Natural killer cell (primary cell): ENCODE measurements at regions of chr2 and their contacts with region 1.

Region 1: DNA sequence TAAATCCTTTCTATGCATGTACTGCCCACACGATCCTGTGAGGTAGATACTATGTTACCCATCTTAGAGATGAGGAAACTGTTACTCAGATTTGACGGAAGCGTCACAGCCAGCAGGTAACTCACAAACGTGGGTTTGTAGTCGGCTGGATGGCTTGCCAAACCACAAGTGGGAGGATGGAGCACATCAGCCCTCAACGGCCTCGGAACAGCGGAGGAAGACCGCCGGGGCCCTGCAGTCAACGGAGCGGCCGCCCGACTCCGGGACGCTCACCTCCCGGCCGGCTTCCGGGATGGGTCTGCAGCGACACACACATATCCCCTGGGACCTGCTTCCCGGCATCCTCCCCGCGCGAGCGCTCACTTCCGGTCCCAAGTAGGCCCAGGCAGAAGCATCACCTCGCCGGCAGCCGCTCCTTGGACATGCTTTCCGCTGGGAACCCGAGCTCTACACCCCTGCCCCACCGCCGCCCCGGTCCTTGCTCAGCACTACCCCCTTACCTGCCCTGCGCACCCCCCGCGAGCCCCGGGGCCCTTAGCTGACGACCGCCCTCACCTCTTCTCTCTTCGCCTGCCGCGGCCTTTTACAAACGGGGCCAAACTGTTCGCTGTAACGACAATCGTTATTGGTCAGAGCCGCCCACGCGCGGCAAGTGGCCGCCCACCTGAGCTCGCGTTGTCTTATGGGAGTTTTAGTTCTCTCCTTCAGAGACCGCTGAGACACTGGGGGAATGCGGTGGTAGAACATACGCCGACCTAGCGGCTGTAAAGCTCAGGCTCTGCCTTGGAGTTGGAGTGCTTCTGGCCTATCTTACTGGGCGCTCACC is at the start of gene C2orf42:
- DNase-seq: peak; percentile 94 to 98
- ATAC-seq: peak; percentile 84 to 96 (median 88)
- H3K4me3 ChIP-seq: peak within 1 kb of the TSS; percentile 78
- H3K4me3 Mint-ChIP-seq: peak within 1 kb of the TSS; percentile 100
- H3K27ac ChIP-seq: peak within 1 kb of the TSS; percentile 90
- H3K27ac Mint-ChIP-seq: peak within 1 kb of the TSS; percentile 96 to 98
- H3K4me1 ChIP-seq: peaks cover 9% of the 10 kb centered on the region
- H3K4me1 Mint-ChIP-seq: peaks cover 16 to 19% of the 10 kb centered on the region in 2 donors
- H3K27me3 ChIP-seq: no peaks in the 10 kb centered on the region
- H3K27me3 Mint-ChIP-seq: no peaks in the 10 kb centered on the region
- CTCF ChIP-seq: no peak
- total RNA-seq, gene C2orf42: 22.7 to 31.5 (median 25.7) TPM

Region 2: DNA sequence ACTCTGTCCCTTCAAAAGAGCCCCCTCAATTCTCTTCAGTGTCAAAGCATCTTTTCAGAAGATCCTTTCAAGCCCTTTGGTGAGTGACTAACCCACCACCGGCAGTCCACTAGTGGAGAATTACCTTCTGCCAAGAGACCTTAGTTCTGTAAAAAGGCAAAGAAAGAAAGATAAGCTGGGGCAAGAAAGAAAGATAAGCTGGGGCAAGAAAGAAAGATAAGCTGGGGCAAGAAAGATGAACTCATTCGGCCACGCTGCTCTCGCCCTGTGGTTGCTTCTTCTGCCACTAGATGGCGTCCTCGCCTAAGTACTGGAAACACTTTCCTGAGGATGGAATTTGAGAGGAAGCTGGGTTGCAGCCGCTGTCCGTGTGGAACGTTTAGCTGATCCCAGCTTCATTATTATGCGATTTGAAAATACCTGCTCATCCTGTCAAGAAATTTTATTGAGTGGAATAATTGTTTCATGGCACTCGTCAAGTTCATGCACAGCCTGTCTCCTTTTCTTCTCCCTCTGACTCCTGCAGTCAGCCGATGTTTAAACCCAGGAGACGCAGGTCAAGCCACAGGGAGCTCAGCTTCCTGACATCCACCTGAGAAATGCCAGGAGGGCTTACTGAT is 466.0 kb before region 1 on chr2:
- intact Hi-C with region 1: loop called (anchors 5 kb)
- DNase-seq: peak; percentile 85 to 91
- ATAC-seq: peak; percentile 87 to 99 (median 96)
- H3K4me3 ChIP-seq: no peak overlapping the region
- H3K4me3 Mint-ChIP-seq: peak overlapping the region; percentile 72
- H3K27ac ChIP-seq: no peak overlapping the region
- H3K27ac Mint-ChIP-seq: peak overlapping the region in 1 of 2 donors; percentile 58
- H3K4me1 ChIP-seq: peaks cover 5% of the 10 kb centered on the region
- H3K4me1 Mint-ChIP-seq: peaks cover 6 to 8% of the 10 kb centered on the region in 2 donors
- H3K27me3 ChIP-seq: no peaks in the 10 kb centered on the region
- H3K27me3 Mint-ChIP-seq: no peaks in the 10 kb centered on the region
- CTCF ChIP-seq: peak; percentile 96

Region 3: DNA sequence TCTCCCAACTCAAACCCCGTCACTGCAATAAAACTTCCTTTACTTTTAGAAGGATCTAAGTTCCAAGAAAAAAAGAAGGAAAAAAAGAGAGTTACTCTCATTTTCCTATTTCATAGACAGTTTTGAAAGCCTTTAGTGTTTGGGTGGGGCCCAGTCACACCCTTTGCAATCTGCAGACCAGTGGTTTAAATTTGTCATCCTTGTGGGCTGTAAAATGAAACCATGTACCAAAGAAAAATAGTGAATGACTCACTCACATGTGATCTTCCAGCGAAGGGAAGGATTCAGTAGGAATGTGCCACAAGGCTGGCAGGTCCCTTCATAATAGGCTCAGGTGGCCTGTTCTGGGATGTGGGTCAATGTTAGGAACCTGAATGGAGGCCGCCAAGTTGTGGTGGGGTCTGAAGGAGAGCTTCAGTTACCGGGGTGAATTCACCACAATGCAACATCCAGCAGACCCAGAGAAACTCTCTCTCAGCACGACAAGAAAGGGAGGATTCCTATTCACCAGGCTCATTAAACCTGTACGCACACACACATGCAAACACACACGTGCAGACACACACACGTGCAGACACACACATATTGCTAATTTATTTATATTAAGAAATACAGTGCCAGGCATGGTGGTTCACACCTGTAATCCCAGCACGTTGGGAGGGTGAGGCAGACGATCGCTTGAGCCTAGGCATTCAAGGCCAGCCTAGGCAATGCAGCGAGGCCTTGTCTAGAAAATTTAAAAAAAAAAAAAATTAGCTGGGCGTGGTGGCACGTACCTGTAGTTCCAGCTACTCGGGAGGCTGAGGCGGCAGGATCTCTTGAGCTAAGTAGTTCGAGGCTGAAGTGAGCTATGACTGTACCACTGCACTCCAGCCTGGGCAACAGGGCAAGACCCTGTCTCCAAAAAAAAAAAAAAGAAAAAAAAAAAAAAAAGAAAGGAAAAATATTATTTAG is 420.2 kb before region 1 on chr2:
- intact Hi-C with region 1: no loop called
- DNase-seq: peak; percentile 44
- ATAC-seq: peak; percentile 54 to 75 (median 70)
- H3K4me3 ChIP-seq: no peak overlapping the region
- H3K4me3 Mint-ChIP-seq: peak overlapping the region; percentile 88
- H3K27ac ChIP-seq: peak overlapping the region; percentile 85
- H3K27ac Mint-ChIP-seq: peak overlapping the region; percentile 70 to 93
- H3K4me1 ChIP-seq: peaks cover 61% of the 10 kb centered on the region
- H3K4me1 Mint-ChIP-seq: peaks cover 81 to 85% of the 10 kb centered on the region in 2 donors
- H3K27me3 ChIP-seq: no peaks in the 10 kb centered on the region
- H3K27me3 Mint-ChIP-seq: no peaks in the 10 kb centered on the region
- CTCF ChIP-seq: no peak

Region 4: GRCh38 chr2:69893684-69894551 is 296.7 kb before region 1 on chr2 and contains the start of gene SNRNP27:
- intact Hi-C with region 1: loop called (anchors 5 kb)
- DNase-seq: peak; percentile 70 to 90
- ATAC-seq: peak; percentile 85 to 94 (median 93)
- H3K4me3 ChIP-seq: peak within 1 kb of the TSS; percentile 76
- H3K4me3 Mint-ChIP-seq: peak within 1 kb of the TSS; percentile 100
- H3K27ac ChIP-seq: peak within 1 kb of the TSS; percentile 71
- H3K27ac Mint-ChIP-seq: peak within 1 kb of the TSS; percentile 95 to 99
- H3K4me1 ChIP-seq: peaks cover 17% of the 10 kb centered on the region
- H3K4me1 Mint-ChIP-seq: peaks cover 24 to 29% of the 10 kb centered on the region in 2 donors
- H3K27me3 ChIP-seq: no peaks in the 10 kb centered on the region
- H3K27me3 Mint-ChIP-seq: no peaks in the 10 kb centered on the region
- CTCF ChIP-seq: no peak
- total RNA-seq, gene SNRNP27: 53.2 to 61.5 (median 58.2) TPM

Region 5: GRCh38 chr2:70069049-70069448 is 121.6 kb before region 1 on chr2:
- intact Hi-C with region 1: loop called (anchors 1 kb)
- DNase-seq: peak; percentile 58 to 93
- ATAC-seq: peak; percentile 84 to 93 (median 84)
- H3K4me3 ChIP-seq: no peak overlapping the region
- H3K4me3 Mint-ChIP-seq: peak overlapping the region; percentile 47
- H3K27ac ChIP-seq: peak overlapping the region; percentile 87
- H3K27ac Mint-ChIP-seq: peak overlapping the region; percentile 88 to 94
- H3K4me1 ChIP-seq: peaks cover 31% of the 10 kb centered on the region
- H3K4me1 Mint-ChIP-seq: peaks cover 31 to 35% of the 10 kb centered on the region in 2 donors
- H3K27me3 ChIP-seq: no peaks in the 10 kb centered on the region
- H3K27me3 Mint-ChIP-seq: no peaks in the 10 kb centered on the region
- CTCF ChIP-seq: no peak

Region 6: GRCh38 chr2:70248181-70248847 is 57.7 kb after region 1 on chr2 and contains the start of gene TIA1:
- intact Hi-C with region 1: loop called (anchors 1 kb)
- DNase-seq: peak; percentile 97 to 100
- ATAC-seq: peak; percentile 94 to 98 (median 96)
- H3K4me3 ChIP-seq: peak within 1 kb of the TSS; percentile 85
- H3K4me3 Mint-ChIP-seq: peak within 1 kb of the TSS; percentile 98
- H3K27ac ChIP-seq: peak within 1 kb of the TSS; percentile 92
- H3K27ac Mint-ChIP-seq: peak within 1 kb of the TSS; percentile 91 to 98
- H3K4me1 ChIP-seq: peaks cover 9% of the 10 kb centered on the region
- H3K4me1 Mint-ChIP-seq: peaks cover 37 to 45% of the 10 kb centered on the region in 2 donors
- H3K27me3 ChIP-seq: no peaks in the 10 kb centered on the region
- H3K27me3 Mint-ChIP-seq: no peaks in the 10 kb centered on the region
- CTCF ChIP-seq: no peak
- total RNA-seq, gene TIA1: 76.9 to 113 (median 93.2) TPM

Region 7: DNA sequence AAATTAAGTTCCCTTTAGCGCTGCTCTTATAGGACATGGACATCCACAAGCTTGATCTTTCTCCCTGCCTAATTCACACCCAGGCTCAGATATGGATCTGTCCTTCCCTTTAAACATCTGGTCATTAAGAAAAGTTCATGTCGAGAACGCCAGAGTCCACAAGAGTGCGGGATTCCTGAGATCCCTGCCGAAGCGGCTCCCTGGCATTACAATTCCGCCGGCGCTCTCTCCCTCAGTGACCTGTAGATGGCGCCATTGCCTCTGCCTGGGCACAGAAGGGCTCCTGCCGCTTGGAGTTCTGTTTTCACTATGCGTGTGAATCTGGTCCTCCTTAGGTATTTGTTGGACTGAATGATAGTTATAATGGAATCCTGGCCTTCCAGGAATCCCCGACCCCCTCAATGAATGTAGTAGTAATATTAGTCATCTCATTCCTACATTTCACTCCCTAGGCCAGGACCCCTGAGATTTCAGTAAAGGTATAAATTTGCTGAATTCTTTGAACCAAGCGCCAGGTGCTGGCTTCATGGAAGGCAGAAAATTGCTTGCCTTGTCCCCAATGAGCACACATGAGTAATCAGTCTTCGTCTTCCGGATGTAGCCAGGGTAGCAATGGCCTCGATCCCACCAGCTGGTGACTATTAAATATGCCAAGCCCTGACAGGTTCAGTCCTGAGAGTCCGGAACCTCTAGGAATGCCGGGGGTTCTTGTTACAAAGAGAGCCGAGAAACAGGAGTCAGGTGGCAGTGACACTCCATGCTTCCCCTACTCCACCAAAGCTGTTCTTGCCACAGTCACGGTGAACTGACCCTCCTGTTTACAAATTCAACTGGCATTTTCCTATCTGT is 671.4 kb after region 1 on chr2:
- intact Hi-C with region 1: no loop called
- DNase-seq: peak; percentile 72 to 85
- ATAC-seq: peak; percentile 81 to 99 (median 95)
- H3K4me3 ChIP-seq: no peak overlapping the region
- H3K4me3 Mint-ChIP-seq: peak overlapping the region; percentile 43
- H3K27ac ChIP-seq: no peak overlapping the region
- H3K27ac Mint-ChIP-seq: peak overlapping the region in 1 of 2 donors; percentile 65
- H3K4me1 ChIP-seq: peaks cover 6% of the 10 kb centered on the region
- H3K4me1 Mint-ChIP-seq: peaks cover 6 to 15% of the 10 kb centered on the region in 2 donors
- H3K27me3 ChIP-seq: peaks cover 5% of the 10 kb centered on the region
- H3K27me3 Mint-ChIP-seq: peaks cover 7 to 23% of the 10 kb centered on the region in 2 donors
- CTCF ChIP-seq: peak; percentile 96